ENCODE measurements at regions of chr9 and their contacts with region 1.

Region 1: DNA sequence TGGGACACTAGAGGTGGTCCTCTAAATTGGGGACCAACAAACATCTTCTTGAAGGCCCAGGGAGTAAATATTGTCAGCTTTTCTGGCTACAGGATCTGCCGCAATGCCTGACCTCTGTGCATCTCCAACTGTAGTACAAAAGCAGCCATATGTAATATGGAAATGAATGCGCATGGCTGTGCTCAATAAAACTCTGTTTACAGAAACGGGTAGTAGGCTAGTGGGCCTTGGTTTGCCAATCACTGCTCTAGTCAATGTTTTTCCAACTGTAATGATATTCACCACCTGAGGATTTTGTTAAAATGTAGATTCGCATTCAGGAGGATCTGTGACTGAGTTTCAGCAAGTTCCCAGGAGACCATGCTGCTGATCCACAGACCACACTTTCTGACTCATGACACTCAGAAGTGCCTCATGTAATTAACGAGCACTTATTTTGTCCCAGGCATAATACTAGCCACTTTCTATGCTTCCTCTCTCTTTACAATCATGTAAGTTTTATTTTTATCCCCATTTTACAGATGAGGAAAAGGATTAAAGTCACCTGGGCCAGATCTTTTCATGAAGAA is 96.9 kb downstream of the MED27 start:
- DNase-seq: no peak
- ATAC-seq: no peak
- H3K4me3 ChIP-seq: no peak overlapping the region
- H3K27ac ChIP-seq: no peak overlapping the region
- H3K4me1 ChIP-seq: peaks cover 43% of the 10 kb centered on the region
- H3K27me3 ChIP-seq: no peaks in the 10 kb centered on the region
- CTCF ChIP-seq: no peak

Region 2: GRCh38 chr9:131418143-131419028 is 564.4 kb before region 1 on chr9:
- CTCF ChIA-PET with region 1: no interaction called
- POLR2A ChIA-PET with region 1: no interaction called
- intact Hi-C with region 1: no loop called
- DNase-seq: no peak
- ATAC-seq: no peak
- H3K4me3 ChIP-seq: no peak overlapping the region
- H3K27ac ChIP-seq: no peak overlapping the region
- H3K4me1 ChIP-seq: peaks cover 17% of the 10 kb centered on the region
- H3K27me3 ChIP-seq: no peaks in the 10 kb centered on the region
- CTCF ChIP-seq: no peak

Region 3: GRCh38 chr9:132094314-132094791 is 111.6 kb after region 1 on chr9:
- CTCF ChIA-PET with region 1: no interaction called
- POLR2A ChIA-PET with region 1: no interaction called
- intact Hi-C with region 1: loop called (anchors 2 kb)
- DNase-seq: peak; percentile 79
- ATAC-seq: peak; percentile 95
- H3K4me3 ChIP-seq: no peak overlapping the region
- H3K27ac ChIP-seq: peak overlapping the region; percentile 96
- H3K4me1 ChIP-seq: peaks cover 26% of the 10 kb centered on the region
- H3K27me3 ChIP-seq: no peaks in the 10 kb centered on the region
- CTCF ChIP-seq: no peak

Region 4: GRCh38 chr9:132160802-132161742 is 178.3 kb after region 1 on chr9:
- CTCF ChIA-PET with region 1: no interaction called
- POLR2A ChIA-PET with region 1: no interaction called
- intact Hi-C with region 1: loop called (anchors 5 kb)
- DNase-seq: peak; percentile 48
- ATAC-seq: peak; percentile 61
- H3K4me3 ChIP-seq: peak overlapping the region; percentile 68
- H3K27ac ChIP-seq: no peak overlapping the region
- H3K4me1 ChIP-seq: no peaks in the 10 kb centered on the region
- H3K27me3 ChIP-seq: peaks cover 35% of the 10 kb centered on the region
- CTCF ChIP-seq: no peak

Measured in PC-3 (cell line).